ENCODE measurements at regions of chr6 and their contacts with region 1.

Region 1: DNA sequence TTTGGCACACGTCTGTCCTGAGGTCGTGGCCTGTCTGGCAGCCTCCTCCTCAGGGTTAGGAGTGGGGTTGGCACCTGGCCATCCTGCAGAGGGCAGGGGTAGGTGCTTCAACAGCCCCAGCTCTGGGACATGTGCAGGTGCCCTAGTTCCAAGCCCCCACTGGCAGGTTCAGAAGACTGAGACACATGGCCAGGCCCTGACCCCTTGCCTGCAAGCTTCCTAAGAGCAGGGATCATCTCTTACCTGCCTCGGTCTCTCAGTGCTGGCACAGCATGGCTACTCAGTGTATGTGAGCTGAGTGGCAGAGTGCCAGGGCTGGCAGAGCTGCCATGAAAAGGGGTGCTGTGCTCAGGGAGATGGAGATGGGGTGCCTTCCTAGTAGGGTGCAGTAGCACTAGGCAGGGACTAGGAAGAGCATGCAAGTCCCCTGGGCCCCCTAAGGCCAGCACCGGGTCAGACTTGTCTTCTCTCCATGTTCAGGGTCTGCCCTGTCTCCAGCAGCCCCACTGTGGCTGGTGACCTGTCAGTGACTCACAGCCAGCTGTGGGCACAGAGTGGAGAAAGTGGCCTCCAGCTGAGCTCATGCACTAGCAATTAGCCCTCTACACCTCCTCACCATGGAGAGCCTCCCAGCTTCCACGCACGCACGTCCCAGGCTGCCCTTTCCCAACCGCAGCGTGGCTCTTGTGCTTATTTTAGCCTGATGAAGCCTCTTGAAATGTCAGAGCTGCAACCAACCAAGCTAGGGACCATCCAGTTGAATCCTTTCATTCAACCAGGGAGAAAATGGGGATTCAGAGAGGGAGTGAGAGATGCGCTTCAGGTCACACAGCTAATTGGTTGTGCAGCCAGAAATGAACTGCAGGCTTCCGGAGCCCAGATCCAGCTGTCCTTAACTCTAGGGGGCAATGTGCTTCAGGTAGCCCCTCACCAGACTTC is 116.6 kb downstream of the MRPL14 start:
- DNase-seq: peak; percentile 73
- ATAC-seq: peak; percentile 76

Region 2: GRCh38 chr6:44049163-44049988 is 38.7 kb after region 1 on chr6:
- intact Hi-C with region 1: loop called (anchors 5 kb)
- DNase-seq: peak; percentile 7
- ATAC-seq: no peak